ENCODE measurements at regions of chr10 and their contacts with region 1.

Region 1: DNA sequence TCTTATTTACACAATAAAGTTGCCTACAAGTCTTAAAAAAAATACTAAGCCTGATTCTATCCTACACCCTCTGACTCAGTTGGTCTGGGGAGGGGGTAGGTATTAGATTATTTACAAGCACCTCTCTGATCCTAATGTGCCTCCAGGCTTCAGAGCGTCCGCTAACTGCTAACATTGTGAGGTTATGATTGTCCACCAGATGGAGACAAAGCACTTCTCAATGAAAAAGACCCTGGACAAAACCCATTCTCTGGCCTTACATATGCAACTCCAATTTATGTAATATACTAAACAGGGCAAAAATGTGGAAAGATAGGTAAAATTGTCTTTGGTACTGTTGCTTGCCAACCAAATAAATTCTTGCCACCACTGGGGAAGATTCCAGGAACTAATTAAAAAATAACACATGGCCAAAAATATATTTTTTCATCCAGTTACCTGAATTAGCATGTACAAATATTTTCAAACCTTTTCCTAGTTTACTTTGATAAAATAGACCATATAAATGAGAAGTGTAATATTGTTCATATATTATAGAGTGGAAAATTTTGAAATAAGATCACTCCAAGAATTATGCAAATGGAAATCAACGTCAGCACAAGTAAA is 92.4 kb downstream of the KIF20B start:
- DNase-seq: peak; percentile 74
- ATAC-seq: peak; percentile 92
- H3K4me3 ChIP-seq: no peak overlapping the region
- H3K27ac ChIP-seq: no peak overlapping the region
- H3K4me1 ChIP-seq: no peaks in the 10 kb centered on the region
- H3K27me3 ChIP-seq: no peaks in the 10 kb centered on the region
- CTCF ChIP-seq: peak; percentile 81
- POLR2A ChIP-seq: no peak
- RAD21 ChIP-seq: peak; percentile 90

Region 2: GRCh38 chr10:89442289-89442688 is 351.5 kb before region 1 on chr10:
- CTCF ChIA-PET with region 1: no interaction called
- POLR2A ChIA-PET with region 1: no interaction called
- dilution Hi-C with region 1: no loop called
- in situ Hi-C with region 1: no loop called
- intact Hi-C with region 1: no loop called
- DNase-seq: no peak
- ATAC-seq: no peak
- H3K4me3 ChIP-seq: no peak overlapping the region
- H3K27ac ChIP-seq: no peak overlapping the region
- H3K4me1 ChIP-seq: peaks cover 3% of the 10 kb centered on the region
- H3K27me3 ChIP-seq: no peaks in the 10 kb centered on the region
- CTCF ChIP-seq: no peak
- POLR2A ChIP-seq: no peak
- RAD21 ChIP-seq: no peak

Region 3: DNA sequence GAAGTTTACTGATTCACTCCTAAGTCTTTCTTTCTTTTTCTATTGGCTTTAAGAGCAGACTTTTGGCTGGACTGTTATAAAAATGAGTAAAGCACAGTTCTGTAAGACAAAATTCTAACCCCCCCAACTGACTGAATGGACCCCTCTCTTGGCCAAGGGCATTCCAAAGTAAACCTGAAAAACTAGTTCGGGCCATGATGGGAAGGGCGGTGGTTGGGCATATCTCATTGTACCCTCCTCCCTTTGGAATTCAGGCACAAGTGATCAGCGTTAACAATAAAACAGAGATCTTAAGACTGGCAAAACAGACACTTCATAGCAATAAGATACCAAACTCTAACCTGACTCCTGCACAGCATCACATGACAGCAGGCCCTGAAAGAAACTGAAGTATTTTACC is 98.4 kb before region 1 on chr10:
- CTCF ChIA-PET with region 1: no interaction called
- POLR2A ChIA-PET with region 1: no interaction called
- dilution Hi-C with region 1: no loop called
- in situ Hi-C with region 1: no loop called
- intact Hi-C with region 1: no loop called
- DNase-seq: no peak
- ATAC-seq: no peak
- H3K4me3 ChIP-seq: no peak overlapping the region
- H3K27ac ChIP-seq: no peak overlapping the region
- H3K4me1 ChIP-seq: peaks cover 2% of the 10 kb centered on the region; the same call in 1 of the 2 replicates
- H3K27me3 ChIP-seq: no peaks in the 10 kb centered on the region
- CTCF ChIP-seq: no peak
- POLR2A ChIP-seq: no peak
- RAD21 ChIP-seq: no peak

Region 4: DNA sequence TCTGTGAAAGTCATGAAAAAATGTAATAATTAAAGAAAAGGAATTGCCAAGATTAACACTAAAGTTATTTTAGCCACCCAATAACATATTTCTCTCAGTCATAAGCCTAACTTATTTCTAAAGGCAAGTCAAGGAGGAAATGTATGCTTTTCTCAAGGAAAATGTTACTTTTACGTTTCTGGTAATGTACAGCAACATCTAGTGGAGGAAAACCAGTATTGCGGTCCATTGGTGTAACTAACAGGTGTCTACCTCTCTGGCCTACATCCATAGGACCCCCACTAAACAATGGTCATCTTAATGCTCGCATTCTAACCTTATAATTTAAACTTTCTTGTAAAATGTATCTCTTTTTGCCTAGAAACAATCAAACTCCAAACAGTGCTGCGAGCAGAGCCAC is 345.1 kb after region 1 on chr10:
- CTCF ChIA-PET with region 1: no interaction called
- POLR2A ChIA-PET with region 1: no interaction called
- dilution Hi-C with region 1: no loop called
- in situ Hi-C with region 1: no loop called
- intact Hi-C with region 1: loop called (anchors 1 kb)
- DNase-seq: no peak
- ATAC-seq: no peak
- H3K4me3 ChIP-seq: no peak overlapping the region
- H3K27ac ChIP-seq: no peak overlapping the region
- H3K4me1 ChIP-seq: no peaks in the 10 kb centered on the region
- H3K27me3 ChIP-seq: no peaks in the 10 kb centered on the region
- CTCF ChIP-seq: no peak
- POLR2A ChIP-seq: no peak
- RAD21 ChIP-seq: no peak

Region 5: DNA sequence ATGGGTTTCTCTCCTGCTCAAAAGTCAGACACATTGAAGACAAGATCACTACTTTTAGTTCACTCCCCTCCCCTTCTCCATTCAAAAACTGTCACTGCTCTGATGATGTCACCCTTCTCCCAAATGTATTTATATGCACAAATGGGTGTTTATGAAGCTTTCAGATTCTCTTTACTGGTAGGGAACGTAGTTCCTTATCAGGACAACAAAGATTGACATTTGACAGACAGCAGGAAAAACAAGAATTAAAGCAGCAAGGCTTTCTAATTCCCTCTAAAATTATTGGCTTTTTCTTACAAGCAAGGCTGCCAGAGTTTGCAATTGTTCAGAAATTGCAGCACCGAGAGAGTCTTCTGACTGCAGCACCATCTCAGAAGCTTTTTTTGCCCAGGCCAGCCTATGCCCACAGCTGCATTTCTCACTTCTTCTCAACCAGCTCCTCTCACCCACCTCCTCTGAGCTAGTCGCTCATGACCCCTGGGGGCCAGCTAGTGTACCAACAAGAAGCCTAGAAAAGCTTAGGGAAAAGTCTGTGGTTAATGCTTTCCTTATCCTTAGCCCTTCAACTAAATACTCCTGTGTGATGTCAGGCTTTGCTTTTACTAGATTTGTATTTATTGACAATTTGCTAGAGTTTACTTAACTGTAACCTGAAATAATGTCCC is 799.0 kb after region 1 on chr10:
- CTCF ChIA-PET with region 1: no interaction called
- POLR2A ChIA-PET with region 1: no interaction called
- dilution Hi-C with region 1: no loop called
- in situ Hi-C with region 1: loop called (anchors 5 kb)
- intact Hi-C with region 1: loop called (anchors 1 kb)
- DNase-seq: peak; percentile 51
- ATAC-seq: peak; percentile 93
- H3K4me3 ChIP-seq: no peak overlapping the region
- H3K27ac ChIP-seq: no peak overlapping the region
- H3K4me1 ChIP-seq: no peaks in the 10 kb centered on the region
- H3K27me3 ChIP-seq: peaks cover 10% of the 10 kb centered on the region
- CTCF ChIP-seq: peak; percentile 64
- POLR2A ChIP-seq: no peak
- RAD21 ChIP-seq: peak; percentile 80

Region 6: DNA sequence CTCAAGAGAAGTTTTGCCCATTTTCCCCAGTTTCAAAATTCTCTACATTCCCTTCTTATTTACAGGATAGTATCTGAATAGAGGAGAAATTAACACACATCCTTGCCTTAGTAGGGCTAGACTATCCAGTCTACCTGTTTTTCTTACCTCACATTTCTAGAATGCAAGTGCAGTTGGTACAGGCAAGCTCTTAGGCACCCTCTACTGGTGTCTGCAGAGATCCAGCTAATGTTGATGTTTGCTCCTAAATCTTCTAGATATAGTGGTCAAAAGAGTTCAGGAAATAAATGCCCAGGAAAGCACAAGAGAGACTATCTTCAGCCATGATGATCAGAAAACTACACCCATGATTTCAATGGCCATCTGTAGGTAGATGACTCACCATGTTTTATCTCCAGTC is 858.8 kb after region 1 on chr10:
- CTCF ChIA-PET with region 1: no interaction called
- POLR2A ChIA-PET with region 1: no interaction called
- dilution Hi-C with region 1: no loop called
- in situ Hi-C with region 1: no loop called
- intact Hi-C with region 1: loop called (anchors 10 kb)
- DNase-seq: peak; percentile 20
- ATAC-seq: no peak
- H3K4me3 ChIP-seq: no peak overlapping the region
- H3K27ac ChIP-seq: no peak overlapping the region
- H3K4me1 ChIP-seq: no peaks in the 10 kb centered on the region
- H3K27me3 ChIP-seq: no peaks in the 10 kb centered on the region
- CTCF ChIP-seq: peak; percentile 46
- POLR2A ChIP-seq: no peak
- RAD21 ChIP-seq: peak; percentile 51

Region 7: DNA sequence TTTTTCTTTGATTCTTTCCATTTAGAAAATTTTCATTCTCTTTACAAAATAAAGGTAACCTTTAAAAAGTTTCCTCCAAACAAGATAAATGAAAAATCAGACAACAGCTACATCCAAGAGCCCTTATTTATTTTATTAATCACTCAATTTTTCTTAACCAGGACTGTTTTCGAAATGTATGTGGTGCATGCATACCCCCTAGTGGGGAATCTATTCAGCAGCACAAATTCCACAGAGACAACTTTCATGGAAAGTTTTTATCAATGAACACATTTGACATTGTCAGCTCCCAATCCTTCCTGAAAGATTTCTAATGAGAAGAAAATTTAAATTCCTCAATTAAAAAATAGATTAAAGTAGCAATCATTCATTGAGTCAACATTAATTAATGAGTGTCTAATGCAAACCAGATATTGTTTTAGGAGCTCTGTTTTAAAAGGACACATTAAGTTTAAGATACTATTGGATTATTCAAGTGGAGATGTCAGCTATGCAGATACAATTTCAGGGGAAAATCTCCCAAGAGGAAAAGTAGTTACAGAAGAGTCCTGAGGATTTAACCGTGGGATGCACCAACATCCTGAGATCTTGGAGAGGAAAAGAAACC is 1069.3 kb after region 1 on chr10:
- CTCF ChIA-PET with region 1: no interaction called
- POLR2A ChIA-PET with region 1: no interaction called
- dilution Hi-C with region 1: no loop called
- in situ Hi-C with region 1: loop called (anchors 10 kb)
- intact Hi-C with region 1: loop called (anchors 1 kb)
- DNase-seq: peak; percentile 47
- ATAC-seq: peak; percentile 30; the same call in 1 of the 2 replicates
- H3K4me3 ChIP-seq: no peak overlapping the region
- H3K27ac ChIP-seq: no peak overlapping the region
- H3K4me1 ChIP-seq: no peaks in the 10 kb centered on the region
- H3K27me3 ChIP-seq: peaks cover 21% of the 10 kb centered on the region
- CTCF ChIP-seq: peak; percentile 89
- POLR2A ChIP-seq: no peak
- RAD21 ChIP-seq: peak; percentile 83